Sciatic nerve (tissue), 2 donors: ENCODE measurements at regions of chr14 and their contacts with region 1.

Region 1: DNA sequence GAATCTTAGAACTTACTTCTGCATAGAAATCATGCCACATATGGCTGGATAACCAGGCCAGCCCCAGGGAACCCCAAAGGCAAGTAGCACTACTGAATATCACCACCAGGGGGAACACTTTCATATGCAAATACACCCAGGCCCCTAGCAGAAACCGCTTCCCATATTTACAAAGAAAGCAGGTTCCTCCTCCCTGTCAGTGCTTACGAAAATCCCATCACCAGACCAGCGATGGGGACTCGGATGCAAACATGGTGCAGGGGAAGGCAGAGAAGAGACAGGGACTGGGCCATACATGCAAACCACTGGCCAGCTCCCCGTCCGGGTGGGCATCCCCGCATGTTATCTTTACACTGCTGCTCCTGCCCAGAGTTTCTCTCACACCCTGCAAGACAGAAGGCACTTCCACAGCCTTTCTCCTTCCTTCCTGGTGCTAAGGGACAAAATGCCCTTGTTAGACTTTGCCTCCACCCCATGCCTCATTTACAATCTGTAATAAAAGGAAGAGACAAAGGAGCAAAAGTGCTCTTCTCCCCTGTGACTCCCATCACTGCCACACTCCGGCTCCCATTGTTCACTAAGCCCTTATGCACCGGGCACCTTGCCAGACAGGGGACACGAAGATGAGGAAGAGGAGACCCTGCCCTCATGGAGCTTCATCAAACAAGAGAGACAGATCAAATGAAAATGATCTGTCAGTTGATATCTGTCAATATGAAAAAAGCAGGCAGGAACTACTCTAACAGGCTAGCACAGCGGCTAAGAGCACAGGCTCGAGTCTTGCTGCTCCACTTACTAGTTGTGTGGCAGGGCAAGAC is 62.3 kb downstream of the PTPN21 start:
- DNase-seq: no peak
- ATAC-seq: peak; percentile 90

Region 2: GRCh38 chr14:88189417-88190191 is 302.9 kb before region 1 on chr14:
- intact Hi-C with region 1: no loop called
- DNase-seq: peak; percentile 70
- ATAC-seq: peak; percentile 91

Region 3: DNA sequence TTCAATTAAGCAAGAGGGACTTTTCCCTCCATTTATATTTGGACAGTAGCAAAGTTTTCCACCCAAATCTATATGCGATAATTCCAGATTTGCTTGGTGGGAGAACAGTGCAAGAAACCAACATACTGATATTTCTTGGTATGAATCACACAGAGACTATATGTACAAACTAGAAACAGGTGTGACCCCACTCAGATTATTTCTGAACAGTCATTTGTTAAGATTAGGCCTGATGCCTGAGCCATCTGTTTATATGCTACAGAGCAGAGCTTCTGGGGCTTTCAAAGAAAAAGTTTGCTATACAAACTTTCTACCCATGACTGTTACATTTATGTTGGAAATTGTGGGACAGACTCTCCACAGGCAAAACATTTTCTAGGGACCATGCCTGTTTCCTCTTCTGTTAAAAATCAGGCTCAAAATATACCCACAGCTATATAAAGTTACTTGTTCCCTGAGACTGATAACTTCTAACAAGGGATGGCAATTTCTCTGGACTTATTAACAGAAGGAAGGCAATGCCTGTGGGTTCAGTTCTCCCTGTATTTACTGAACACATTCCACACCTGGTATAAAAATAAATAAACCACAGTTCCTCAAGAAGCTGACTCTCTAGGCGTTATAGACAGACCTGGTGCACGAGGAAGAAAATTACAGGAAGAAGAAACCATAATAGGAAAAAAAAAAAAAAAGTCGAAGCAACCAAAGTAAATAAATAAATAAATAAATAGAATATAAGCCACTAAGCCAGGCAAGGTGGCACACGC is 54.3 kb after region 1 on chr14:
- intact Hi-C with region 1: loop called (anchors 10 kb)
- DNase-seq: no peak
- ATAC-seq: no peak

Region 4: GRCh38 chr14:90204516-90204915 is 1712.0 kb after region 1 on chr14:
- intact Hi-C with region 1: no loop called
- DNase-seq: no peak
- ATAC-seq: no peak